Panc1 (cell line): ENCODE measurements at regions of chr1 and their contacts with region 1.

Region 1: GRCh38 chr1:3453203-3453761 is 1.2 kb upstream of the ARHGEF16 start:
- DNase-seq: peak; percentile 32
- ATAC-seq: peak; percentile 79
- H3K4me3 ChIP-seq: no peak overlapping the region
- H3K27ac ChIP-seq: no peak overlapping the region
- H3K4me1 ChIP-seq: peaks cover 9% of the 10 kb centered on the region
- H3K27me3 ChIP-seq: no peaks in the 10 kb centered on the region
- CTCF ChIP-seq: peak; percentile 96

Region 2: GRCh38 chr1:3431266-3431665 is 22.0 kb before region 1 on chr1:
- CTCF ChIA-PET with region 1: no interaction called
- POLR2A ChIA-PET with region 1: no interaction called
- in situ Hi-C with region 1: no loop called
- intact Hi-C with region 1: no loop called
- DNase-seq: no peak
- ATAC-seq: peak; percentile 84
- H3K4me3 ChIP-seq: no peak overlapping the region
- H3K27ac ChIP-seq: no peak overlapping the region
- H3K4me1 ChIP-seq: no peaks in the 10 kb centered on the region
- H3K27me3 ChIP-seq: no peaks in the 10 kb centered on the region
- CTCF ChIP-seq: peak; percentile 76; the same call in 1 of the 2 replicates

Region 3: DNA sequence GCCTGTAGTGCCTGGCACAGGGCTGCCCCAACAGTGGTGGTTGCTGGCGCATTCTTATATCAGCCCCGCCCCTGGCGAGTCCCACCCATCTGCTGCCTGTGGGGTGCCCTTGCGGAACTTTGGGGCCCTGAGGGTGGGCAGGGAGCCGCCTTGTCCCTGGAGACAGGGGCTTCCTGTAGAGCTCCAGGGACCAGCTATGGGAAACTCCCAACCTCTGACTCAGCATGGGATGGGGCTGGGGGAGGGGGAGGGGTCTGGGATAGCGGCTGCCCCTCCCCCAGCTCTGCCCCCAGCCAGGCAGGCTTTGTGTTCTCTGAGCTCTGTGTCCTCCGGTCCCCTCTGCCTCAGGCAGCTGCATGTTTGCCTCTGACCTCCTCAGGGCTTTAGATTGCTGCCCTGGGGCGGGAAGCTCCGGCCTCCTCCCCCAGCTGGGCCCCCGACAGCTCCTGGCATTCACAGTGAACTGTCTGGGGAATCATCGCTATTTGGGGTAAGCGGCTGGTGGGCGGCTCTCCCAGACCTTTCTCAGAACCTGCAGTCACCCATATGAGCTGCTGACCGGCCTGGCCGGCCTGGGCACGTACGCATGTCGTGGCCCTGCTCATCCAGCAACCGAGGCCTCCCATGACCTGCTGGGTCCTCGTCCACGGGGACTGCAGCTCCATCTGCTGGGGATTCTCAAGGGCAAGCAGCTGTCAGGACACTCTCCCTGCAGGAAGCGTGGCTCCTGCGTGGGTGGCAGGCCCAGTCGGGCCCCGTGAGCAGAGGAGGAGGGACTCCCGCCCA is 18.2 kb after region 1 on chr1:
- CTCF ChIA-PET with region 1: interaction called, 21 read pairs
- POLR2A ChIA-PET with region 1: no interaction called
- in situ Hi-C with region 1: no loop called
- intact Hi-C with region 1: no loop called
- DNase-seq: no peak
- ATAC-seq: peak; percentile 62
- H3K4me3 ChIP-seq: no peak overlapping the region
- H3K27ac ChIP-seq: no peak overlapping the region
- H3K4me1 ChIP-seq: peaks cover 22% of the 10 kb centered on the region
- H3K27me3 ChIP-seq: no peaks in the 10 kb centered on the region
- CTCF ChIP-seq: no peak; the same call in 1 of the 2 replicates

Region 4: GRCh38 chr1:3483801-3484444 is 30.6 kb after region 1 on chr1:
- CTCF ChIA-PET with region 1: interaction called, 27 read pairs
- POLR2A ChIA-PET with region 1: no interaction called
- in situ Hi-C with region 1: no loop called
- intact Hi-C with region 1: loop called (anchors 1 kb)
- DNase-seq: peak; percentile 12
- ATAC-seq: peak; percentile 50
- H3K4me3 ChIP-seq: no peak overlapping the region
- H3K27ac ChIP-seq: no peak overlapping the region
- H3K4me1 ChIP-seq: peaks cover 14% of the 10 kb centered on the region
- H3K27me3 ChIP-seq: no peaks in the 10 kb centered on the region
- CTCF ChIP-seq: peak; percentile 96